GM10248 (cell line): ENCODE measurements at regions of chr6 and their contacts with region 1.

Region 1: DNA sequence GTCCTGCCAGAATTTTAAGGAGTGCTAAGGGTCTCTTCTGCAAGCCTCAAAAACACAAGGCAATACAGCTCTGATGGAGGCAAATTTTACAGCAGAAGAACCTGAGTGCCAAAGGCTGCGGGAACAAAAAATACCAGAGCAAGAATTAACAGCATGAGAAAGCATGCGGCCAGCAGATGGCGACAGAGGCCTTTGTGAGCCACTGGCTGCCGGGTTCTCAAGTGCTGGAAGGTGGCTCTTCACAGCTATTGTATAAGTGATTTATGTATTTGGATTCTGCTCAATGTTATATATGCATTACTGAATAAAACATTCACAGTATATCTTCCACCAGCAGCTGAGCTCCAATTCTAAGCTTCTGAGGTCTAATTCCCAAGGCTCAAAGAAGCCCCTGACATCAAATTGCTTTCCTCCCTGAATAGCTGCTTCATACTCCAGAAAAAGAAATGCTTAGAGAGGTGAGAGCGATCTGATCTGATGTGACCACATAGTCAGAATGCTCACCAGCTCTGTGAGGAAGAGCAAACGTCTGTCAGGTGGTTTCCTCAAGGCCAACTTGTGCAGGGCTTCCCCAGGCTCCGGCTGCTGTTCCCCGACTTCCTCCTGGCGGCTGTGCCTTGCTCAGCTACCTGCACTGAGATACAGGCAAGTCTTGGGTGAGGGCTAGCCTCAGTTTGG is 58.6 kb downstream of the PPP1R3G start:
- DNase-seq: peak; percentile 78
- CTCF ChIP-seq: peak; percentile 86

Region 2: DNA sequence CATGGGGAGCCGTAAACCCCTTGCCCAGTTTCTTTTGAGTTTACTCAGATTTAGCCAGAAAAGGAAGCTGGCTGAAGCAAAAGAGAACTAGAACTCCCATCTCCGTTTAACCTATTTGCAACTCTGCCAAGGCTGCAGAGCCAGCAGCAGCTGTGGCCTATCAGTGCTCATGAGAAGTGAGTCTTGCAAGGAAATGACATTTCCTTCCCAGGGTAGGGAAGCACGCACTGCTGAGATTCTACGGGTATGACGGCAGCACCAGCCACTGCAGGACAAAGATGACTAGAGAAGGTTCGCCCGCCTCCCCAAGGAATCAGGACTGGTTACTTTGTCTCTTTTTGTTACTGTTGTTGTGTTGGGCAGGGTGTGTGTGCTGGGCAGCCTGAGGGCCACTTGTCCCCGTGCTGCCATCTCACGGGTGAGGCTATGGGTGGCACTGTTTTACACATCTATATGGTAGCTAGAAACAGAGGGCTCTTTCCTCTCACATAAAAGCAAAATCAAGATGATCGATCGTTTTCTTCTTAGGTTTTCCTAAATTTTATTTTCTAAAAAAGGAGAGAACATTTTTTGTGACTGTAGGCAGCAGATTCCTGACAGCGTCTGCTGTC is 10.9 kb before region 1 on chr6:
- CTCF ChIA-PET with region 1: interaction called, 22 read pairs
- POLR2A ChIA-PET with region 1: no interaction called
- DNase-seq: peak; percentile 29
- CTCF ChIP-seq: peak; percentile 12

Region 3: GRCh38 chr6:5167501-5167900 is 23.7 kb after region 1 on chr6:
- CTCF ChIA-PET with region 1: interaction called, 27 read pairs
- POLR2A ChIA-PET with region 1: no interaction called
- DNase-seq: no peak
- CTCF ChIP-seq: no peak

Region 4: DNA sequence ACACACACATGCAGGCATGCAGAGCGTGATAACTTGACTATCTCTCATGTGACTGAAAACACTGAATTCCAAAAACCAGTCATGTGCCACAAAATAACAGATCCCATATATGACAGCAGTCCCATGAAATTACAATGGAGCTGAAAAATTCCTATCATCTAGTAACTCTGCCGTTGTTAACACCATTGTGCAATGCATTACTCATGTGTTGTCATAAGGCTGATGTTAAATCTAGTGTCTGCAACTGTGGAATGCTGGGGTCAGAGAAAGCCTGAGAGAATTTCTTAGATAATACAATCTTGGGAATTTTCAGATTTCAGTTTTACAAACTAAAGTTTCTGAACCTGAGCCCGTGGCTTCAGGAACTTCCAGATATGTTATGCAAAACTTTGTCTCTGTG is 46.7 kb after region 1 on chr6:
- CTCF ChIA-PET with region 1: interaction called, 11 read pairs
- POLR2A ChIA-PET with region 1: no interaction called
- DNase-seq: no peak
- CTCF ChIP-seq: no peak

Region 5: DNA sequence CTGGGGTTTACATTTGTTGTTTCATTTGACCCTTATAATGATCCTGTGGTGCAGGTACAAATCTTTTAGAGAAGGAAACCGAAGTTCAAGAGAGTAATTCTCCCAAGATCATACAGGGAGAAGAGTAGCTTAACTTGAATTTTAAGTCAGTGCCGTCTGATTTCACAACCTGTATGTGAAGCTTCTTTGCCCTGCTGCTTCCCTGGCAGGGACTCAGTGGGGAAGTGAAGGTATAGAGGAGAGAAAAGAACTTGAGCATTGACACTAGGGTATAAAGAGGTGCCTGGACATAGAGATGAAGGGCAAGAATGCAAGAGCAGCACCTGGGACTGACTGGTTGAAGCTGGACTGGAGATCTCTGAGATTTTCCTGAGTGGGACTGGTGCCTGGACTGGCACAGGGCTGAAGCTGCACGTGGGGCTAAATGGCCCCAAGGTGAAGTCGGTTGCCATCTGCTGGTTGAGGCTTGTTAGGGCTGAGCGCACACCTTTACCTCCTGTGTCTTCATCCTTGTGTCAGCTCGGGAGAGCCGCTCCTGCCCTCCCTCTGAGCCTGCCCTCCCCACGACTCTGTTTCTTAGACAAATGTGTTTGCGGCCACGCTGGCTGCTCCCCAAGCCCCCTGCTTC is 159.3 kb after region 1 on chr6:
- CTCF ChIA-PET with region 1: interaction called, 122 read pairs
- POLR2A ChIA-PET with region 1: no interaction called
- DNase-seq: peak; percentile 77
- CTCF ChIP-seq: peak; percentile 81

Region 6: DNA sequence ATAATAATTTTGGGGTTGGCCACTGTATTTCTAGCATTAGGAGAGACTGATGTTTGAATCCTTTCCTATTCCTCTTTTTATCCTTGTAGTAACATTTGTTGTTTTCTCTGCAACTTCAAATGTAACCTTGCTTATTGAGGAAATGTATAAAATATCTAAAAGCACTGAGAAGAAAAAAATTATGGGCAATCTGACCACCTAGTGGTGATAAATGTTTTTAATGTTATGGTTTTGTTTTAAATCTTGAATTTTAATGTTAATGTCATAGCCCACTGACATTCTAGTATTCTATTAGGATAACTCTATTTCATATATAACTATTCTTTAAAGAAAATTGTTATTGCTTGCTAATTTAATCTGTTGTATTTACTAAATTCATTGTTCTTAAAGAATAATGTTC is 251.9 kb after region 1 on chr6:
- CTCF ChIA-PET with region 1: interaction called, 14 read pairs
- POLR2A ChIA-PET with region 1: no interaction called
- DNase-seq: no peak
- CTCF ChIP-seq: no peak